Dendritic cell treated with granulocyte-macrophage colony-stimulating factor and Interleukin-4, amounts not matched to agents 40 ng/mL and 50 ng/mL, for 4 days (primary cell): ENCODE measurements at regions of chr11 and their contacts with region 1.

Region 1: GRCh38 chr11:76799066-76799804 is 16.1 kb downstream of the TSKU start:
- H3K4me3 Mint-ChIP-seq: peak overlapping the region; percentile 52
- H3K27ac Mint-ChIP-seq: peak overlapping the region; percentile 8
- H3K4me1 Mint-ChIP-seq: peaks cover 23% of the 10 kb centered on the region
- H3K27me3 Mint-ChIP-seq: peaks cover 33% of the 10 kb centered on the region

Region 2: GRCh38 chr11:76734456-76735420 is 64.5 kb before region 1 on chr11:
- intact Hi-C with region 1: loop called (anchors 1 kb)
- H3K4me3 Mint-ChIP-seq: no peak overlapping the region
- H3K27ac Mint-ChIP-seq: no peak overlapping the region
- H3K4me1 Mint-ChIP-seq: peaks cover 25% of the 10 kb centered on the region
- H3K27me3 Mint-ChIP-seq: peaks cover 29% of the 10 kb centered on the region